Dorsolateral prefrontal cortex (tissue), 120 donors: ENCODE measurements at regions of chr2 and their contacts with region 1.

Region 1: GRCh38 chr2:68121873-68122679 is 35.6 kb upstream of the PNO1 start:
- DNase-seq: peak; percentile 81 to 94 (median 88)
- H3K4me3 ChIP-seq: peak overlapping the region in 14 of 59 donors; percentile 1 to 38 (median 17)
- H3K27ac ChIP-seq: no peak overlapping the region
- H3K27me3 ChIP-seq: no peaks in the 10 kb centered on the region
- CTCF ChIP-seq: peak; percentile 76 to 99 (median 96)

Region 2: GRCh38 chr2:68157402-68158133 is 35.5 kb after region 1 on chr2 and contains the start of gene PNO1:
- intact Hi-C with region 1: loop called in 1 of 2 experiments (anchors 5 kb)
- DNase-seq: peak; percentile 89 to 96 (median 94)
- H3K4me3 ChIP-seq: peak within 1 kb of the TSS; percentile 69 to 100 (median 95)
- H3K27ac ChIP-seq: peak within 1 kb of the TSS; percentile 92 to 100 (median 99)
- H3K27me3 ChIP-seq: no peaks in the 10 kb centered on the region
- CTCF ChIP-seq: peak in 17 of 56 donors; percentile 1 to 51 (median 18)
- total RNA-seq, gene PNO1: 4.0 to 14.5 (median 8.7) TPM

Region 3: GRCh38 chr2:68244456-68244855 is 122.4 kb after region 1 on chr2:
- intact Hi-C with region 1: loop called in 1 of 2 experiments (anchors 10 kb)
- DNase-seq: no peak
- H3K4me3 ChIP-seq: no peak overlapping the region
- H3K27ac ChIP-seq: peak overlapping the region in 1 of 59 donors; percentile 4
- H3K27me3 ChIP-seq: no peaks in the 10 kb centered on the region
- CTCF ChIP-seq: peak in 43 of 56 donors; percentile 13 to 63 (median 34)

Region 4: DNA sequence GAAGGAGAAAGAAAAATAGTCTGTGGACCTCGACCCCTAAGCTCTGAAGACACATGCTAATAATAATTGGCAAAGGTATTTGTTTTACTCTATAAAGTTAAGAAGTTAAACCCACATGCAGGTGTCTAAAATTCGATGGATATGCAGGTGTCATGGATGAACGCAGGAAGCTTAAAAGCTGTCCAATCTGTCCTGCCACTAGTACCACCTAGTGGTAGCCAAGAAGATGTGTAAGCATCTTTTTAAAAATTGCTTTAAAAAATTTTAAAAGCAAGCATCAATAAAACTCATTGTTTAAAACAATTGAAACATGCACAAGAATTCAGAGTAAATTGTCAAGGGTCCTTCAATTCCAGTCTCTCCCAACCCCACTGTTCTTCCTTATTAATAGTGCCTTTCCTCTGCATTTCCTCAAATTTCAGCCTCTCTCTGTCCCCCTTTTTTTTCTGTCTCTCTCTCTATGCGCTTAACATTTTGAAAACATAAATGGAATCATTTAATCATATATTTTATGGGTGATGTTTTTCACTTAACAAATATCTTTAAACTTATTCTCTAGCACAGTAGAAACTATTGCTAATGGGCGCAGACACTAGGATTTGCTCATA is 160.8 kb after region 1 on chr2:
- intact Hi-C with region 1: loop called in 1 of 2 experiments (anchors 5 kb)
- DNase-seq: no peak
- H3K4me3 ChIP-seq: peak overlapping the region in 36 of 59 donors; percentile 0 to 51 (median 23)
- H3K27ac ChIP-seq: no peak overlapping the region
- H3K27me3 ChIP-seq: no peaks in the 10 kb centered on the region
- CTCF ChIP-seq: peak; percentile 67 to 95 (median 81)

Region 5: GRCh38 chr2:68357605-68358337 is 235.7 kb after region 1 on chr2:
- intact Hi-C with region 1: loop called in 1 of 2 experiments (anchors 5 kb)
- DNase-seq: peak in 3 of 10 donors; percentile 14 to 46 (median 27)
- H3K4me3 ChIP-seq: no peak overlapping the region
- H3K27ac ChIP-seq: no peak overlapping the region
- H3K27me3 ChIP-seq: no peaks in the 10 kb centered on the region
- CTCF ChIP-seq: peak in 49 of 56 donors; percentile 9 to 61 (median 37)

Region 6: DNA sequence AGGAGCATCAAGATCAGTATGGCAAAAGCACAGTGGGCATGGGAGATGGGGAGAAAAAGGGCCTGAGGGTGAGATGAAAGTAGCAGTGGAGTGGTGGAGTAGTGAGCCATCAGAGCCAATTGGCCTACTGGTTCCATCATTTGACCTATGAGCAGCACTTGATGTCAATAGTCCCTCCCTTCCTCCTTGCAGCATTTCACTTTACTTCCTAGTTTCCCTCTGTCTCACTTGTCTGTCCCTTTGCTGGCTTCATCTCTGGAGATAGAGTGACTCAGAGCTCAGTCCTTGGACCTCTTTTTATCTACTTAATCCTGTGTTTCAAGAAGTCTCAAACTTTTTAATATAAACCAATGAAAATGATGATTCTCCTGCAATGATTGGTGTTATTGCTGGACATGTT is 312.9 kb after region 1 on chr2:
- intact Hi-C with region 1: loop called (anchors 5 to 10 kb)
- DNase-seq: no peak
- H3K4me3 ChIP-seq: no peak overlapping the region
- H3K27ac ChIP-seq: peak overlapping the region in 35 of 59 donors; percentile 6 to 84 (median 63)
- H3K27me3 ChIP-seq: no peaks in the 10 kb centered on the region
- CTCF ChIP-seq: no peak

Region 7: GRCh38 chr2:68441179-68441993 is 319.3 kb after region 1 on chr2:
- intact Hi-C with region 1: loop called (anchors 5 to 10 kb)
- DNase-seq: peak in 9 of 10 donors; percentile 64 to 89 (median 80)
- H3K4me3 ChIP-seq: no peak overlapping the region
- H3K27ac ChIP-seq: peak overlapping the region in 30 of 59 donors; percentile 10 to 74 (median 51)
- H3K27me3 ChIP-seq: no peaks in the 10 kb centered on the region
- CTCF ChIP-seq: peak; percentile 89 to 98 (median 94)